Endothelial cell of umbilical vein (primary cell): ENCODE measurements at regions of chr9 and their contacts with region 1.

Region 1: DNA sequence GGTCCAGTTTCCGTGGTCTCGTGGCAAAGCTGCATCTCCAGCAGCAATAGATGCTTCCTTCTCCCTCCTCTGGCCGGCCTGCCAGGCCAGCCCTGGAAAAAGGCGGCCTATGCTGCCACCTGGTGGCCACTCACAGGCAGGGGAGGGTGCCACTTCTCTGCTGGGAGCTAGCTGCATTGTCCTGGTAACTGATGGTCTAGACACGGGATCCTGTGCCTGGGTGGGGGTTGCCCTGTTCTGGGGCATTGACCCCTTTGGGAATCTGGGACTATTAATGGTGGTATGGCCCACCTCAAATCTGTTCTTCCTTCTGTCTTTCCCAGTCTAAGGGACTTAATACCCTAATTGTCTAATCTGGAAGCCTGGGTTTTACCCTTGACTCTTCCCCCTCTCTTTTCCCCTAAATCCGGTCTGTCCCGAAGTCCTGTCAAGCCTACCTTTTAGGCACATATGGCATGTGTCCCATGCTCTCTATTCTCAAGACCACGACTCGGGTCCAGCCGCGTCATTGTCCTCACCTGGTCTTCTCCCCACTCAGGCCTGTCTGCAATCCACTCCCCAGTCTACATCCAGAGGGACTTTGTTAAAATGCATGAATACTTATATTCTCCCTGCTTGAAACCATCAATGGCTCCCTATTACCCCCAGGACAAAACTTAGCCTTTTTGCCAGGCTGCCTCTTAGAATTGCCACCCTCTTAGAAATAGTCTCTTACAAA is 20.0 kb upstream of the PTGS1 start:
- DNase-seq: peak; percentile 77
- H3K4me3 ChIP-seq: no peak overlapping the region
- H3K27ac ChIP-seq: no peak overlapping the region
- H3K4me1 ChIP-seq: peaks cover 23% of the 10 kb centered on the region
- H3K27me3 ChIP-seq: no peaks in the 10 kb centered on the region
- CTCF ChIP-seq: peak; percentile 92 to 94
- POLR2A ChIP-seq: no peak

Region 2: GRCh38 chr9:122099271-122099869 is 251.4 kb before region 1 on chr9:
- CTCF ChIA-PET with region 1: interaction called, 254 read pairs
- POLR2A ChIA-PET with region 1: no interaction called
- dilution Hi-C with region 1: loop called (anchors 25 kb)
- intact Hi-C with region 1: loop called (anchors 1 kb)
- DNase-seq: peak; percentile 60
- H3K4me3 ChIP-seq: no peak overlapping the region
- H3K27ac ChIP-seq: no peak overlapping the region
- H3K4me1 ChIP-seq: no peaks in the 10 kb centered on the region
- H3K27me3 ChIP-seq: peaks cover 0 to 2% of the 10 kb centered on the region in 2 experiments
- CTCF ChIP-seq: peak; percentile 77 to 85
- POLR2A ChIP-seq: no peak

Region 3: DNA sequence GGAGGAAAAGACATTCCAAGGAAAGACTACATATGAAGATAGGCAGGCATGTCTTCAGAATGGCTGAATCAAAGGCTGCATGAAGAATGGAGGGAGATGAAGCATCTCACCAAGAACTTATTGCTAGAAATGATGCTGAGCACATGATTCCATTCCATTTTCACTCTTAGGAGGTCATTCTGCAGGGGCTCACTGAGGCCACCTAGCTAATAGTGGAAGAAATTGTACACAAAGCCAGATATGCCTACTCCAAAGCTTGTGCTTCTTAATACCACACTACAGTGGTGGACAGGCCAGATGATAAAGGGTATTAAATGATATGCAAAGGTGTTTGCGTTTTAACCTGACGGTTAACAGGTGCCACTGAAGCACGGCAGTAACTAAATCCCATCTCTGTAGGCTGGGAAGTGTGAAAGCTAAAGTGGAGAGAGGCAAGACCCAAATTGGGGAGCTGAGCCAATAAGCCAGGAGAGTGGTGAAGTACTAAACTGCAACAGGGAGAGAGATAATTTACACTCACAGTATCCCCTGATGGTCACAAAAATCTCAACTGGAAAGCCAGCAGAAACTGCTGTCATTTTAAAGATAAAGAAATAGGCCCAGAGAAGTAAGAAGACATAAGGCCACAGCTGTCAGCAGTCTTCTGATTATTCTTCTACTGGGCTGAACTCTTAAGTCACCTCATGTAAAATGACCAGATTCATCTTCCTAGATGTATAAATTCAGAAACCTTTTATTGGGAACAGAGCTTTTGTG is 205.8 kb before region 1 on chr9:
- CTCF ChIA-PET with region 1: interaction called, 55 read pairs
- POLR2A ChIA-PET with region 1: no interaction called
- dilution Hi-C with region 1: no loop called
- intact Hi-C with region 1: no loop called
- DNase-seq: peak; percentile 60
- H3K4me3 ChIP-seq: no peak overlapping the region
- H3K27ac ChIP-seq: no peak overlapping the region
- H3K4me1 ChIP-seq: peaks cover 45% of the 10 kb centered on the region
- H3K27me3 ChIP-seq: no peaks in the 10 kb centered on the region
- CTCF ChIP-seq: peak; percentile 53 to 62
- POLR2A ChIP-seq: no peak

Region 4: GRCh38 chr9:122222791-122223190 is 128.0 kb before region 1 on chr9:
- CTCF ChIA-PET with region 1: interaction called, 15 read pairs
- POLR2A ChIA-PET with region 1: no interaction called
- dilution Hi-C with region 1: no loop called
- intact Hi-C with region 1: no loop called
- DNase-seq: no peak
- H3K4me3 ChIP-seq: no peak overlapping the region
- H3K27ac ChIP-seq: no peak overlapping the region
- H3K4me1 ChIP-seq: peaks cover 16% of the 10 kb centered on the region
- H3K27me3 ChIP-seq: peaks cover 30 to 40% of the 10 kb centered on the region in 2 experiments
- CTCF ChIP-seq: no peak
- POLR2A ChIP-seq: no peak

Region 5: GRCh38 chr9:122254761-122255160 is 96.0 kb before region 1 on chr9:
- CTCF ChIA-PET with region 1: interaction called, 11 read pairs
- POLR2A ChIA-PET with region 1: no interaction called
- dilution Hi-C with region 1: no loop called
- intact Hi-C with region 1: loop called (anchors 2 kb)
- DNase-seq: no peak
- H3K4me3 ChIP-seq: peak overlapping the region in 1 of 3 experiments; percentile 33
- H3K27ac ChIP-seq: peak overlapping the region; percentile 88
- H3K4me1 ChIP-seq: peaks cover 37% of the 10 kb centered on the region
- H3K27me3 ChIP-seq: no peaks in the 10 kb centered on the region
- CTCF ChIP-seq: no peak
- POLR2A ChIP-seq: no peak

Region 6: DNA sequence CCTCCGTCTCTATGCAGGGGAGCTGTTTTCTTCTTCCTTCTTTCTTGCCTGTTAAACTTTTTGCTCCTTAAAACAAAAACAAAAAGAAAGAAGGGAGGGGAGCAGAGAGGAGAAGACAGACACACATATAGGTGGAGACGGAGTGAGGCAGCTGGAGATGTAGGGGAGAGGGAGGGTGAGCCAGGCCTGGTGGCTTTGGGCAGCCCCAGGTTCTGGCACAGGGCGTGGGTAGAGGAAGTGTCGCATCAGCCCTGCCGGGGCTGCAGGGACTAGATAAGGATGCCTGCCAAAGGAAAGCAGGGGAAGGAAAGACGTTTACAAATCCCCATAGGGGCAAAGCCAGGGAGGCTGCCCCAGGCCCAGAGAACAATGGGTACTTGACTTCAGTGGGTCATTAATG is 18.7 kb before region 1 on chr9:
- CTCF ChIA-PET with region 1: interaction called, 7 read pairs
- POLR2A ChIA-PET with region 1: no interaction called
- dilution Hi-C with region 1: no loop called
- intact Hi-C with region 1: loop called (anchors 1 kb)
- DNase-seq: peak; percentile 83
- H3K4me3 ChIP-seq: no peak overlapping the region
- H3K27ac ChIP-seq: peak overlapping the region; percentile 13
- H3K4me1 ChIP-seq: peaks cover 21% of the 10 kb centered on the region
- H3K27me3 ChIP-seq: no peaks in the 10 kb centered on the region
- CTCF ChIP-seq: no peak
- POLR2A ChIP-seq: peak; percentile 26

Region 7: DNA sequence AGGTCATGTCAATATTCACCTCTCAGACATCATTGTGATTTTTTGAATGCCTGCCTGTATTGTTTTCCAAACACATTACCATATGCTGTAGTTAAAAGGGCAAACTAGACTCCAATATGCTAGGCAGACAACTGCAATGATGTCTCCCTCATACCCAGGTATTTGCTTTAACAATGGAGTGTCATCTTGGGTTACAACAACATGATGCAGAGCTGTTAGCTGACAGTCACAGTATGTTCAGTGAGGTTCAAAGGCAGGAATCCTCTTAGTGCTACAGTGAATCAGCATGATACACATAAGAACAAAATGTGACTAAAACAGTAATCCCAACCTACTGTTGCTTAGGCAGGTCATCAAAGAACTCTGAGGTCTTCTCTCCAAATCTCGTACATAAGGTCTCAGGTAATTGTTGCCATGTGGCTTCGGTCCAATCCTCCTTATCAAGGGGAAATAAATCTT is 102.9 kb after region 1 on chr9:
- CTCF ChIA-PET with region 1: interaction called, 56 read pairs
- POLR2A ChIA-PET with region 1: no interaction called
- dilution Hi-C with region 1: no loop called
- intact Hi-C with region 1: loop called (anchors 1 kb)
- DNase-seq: peak; percentile 27
- H3K4me3 ChIP-seq: no peak overlapping the region
- H3K27ac ChIP-seq: no peak overlapping the region
- H3K4me1 ChIP-seq: peaks cover 6% of the 10 kb centered on the region
- H3K27me3 ChIP-seq: peaks cover 2 to 7% of the 10 kb centered on the region in 2 experiments
- CTCF ChIP-seq: no peak
- POLR2A ChIP-seq: no peak